Activated CD8-positive, alpha-beta T cell treated with anti-CD3 and anti-CD28 coated beads for 36 hours (primary cell): ENCODE measurements at regions of chrX and their contacts with region 1.

Region 1: GRCh38 chrX:51487960-51488267 is 8.5 kb downstream of the NUDT11 start:
- DNase-seq: no peak
- ATAC-seq: no peak
- H3K4me3 Mint-ChIP-seq: no peak overlapping the region
- H3K27ac Mint-ChIP-seq: no peak overlapping the region
- H3K4me1 Mint-ChIP-seq: no peaks in the 10 kb centered on the region
- H3K27me3 Mint-ChIP-seq: peaks cover 2% of the 10 kb centered on the region
- CTCF ChIP-seq: no peak

Region 2: GRCh38 chrX:51476930-51477329 is 11.0 kb before region 1 on chrX:
- CTCF ChIA-PET with region 1: interaction called, 13 read pairs
- POLR2A ChIA-PET with region 1: no interaction called
- intact Hi-C with region 1: no loop called
- DNase-seq: no peak
- ATAC-seq: no peak
- H3K4me3 Mint-ChIP-seq: no peak overlapping the region
- H3K27ac Mint-ChIP-seq: no peak overlapping the region
- H3K4me1 Mint-ChIP-seq: no peaks in the 10 kb centered on the region
- H3K27me3 Mint-ChIP-seq: no peaks in the 10 kb centered on the region
- CTCF ChIP-seq: no peak